Endothelial cell of umbilical vein (primary cell): ENCODE measurements at regions of chr20 and their contacts with region 1.

Region 1: GRCh38 chr20:36098364-36098763 is 56.2 kb upstream of the EPB41L1 start:
- DNase-seq: peak; percentile 83
- H3K4me3 ChIP-seq: no peak overlapping the region
- H3K27ac ChIP-seq: peak overlapping the region; percentile 54
- H3K4me1 ChIP-seq: peaks cover 28% of the 10 kb centered on the region
- H3K27me3 ChIP-seq: no peaks in the 10 kb centered on the region
- CTCF ChIP-seq: no peak
- POLR2A ChIP-seq: no peak

Region 2: DNA sequence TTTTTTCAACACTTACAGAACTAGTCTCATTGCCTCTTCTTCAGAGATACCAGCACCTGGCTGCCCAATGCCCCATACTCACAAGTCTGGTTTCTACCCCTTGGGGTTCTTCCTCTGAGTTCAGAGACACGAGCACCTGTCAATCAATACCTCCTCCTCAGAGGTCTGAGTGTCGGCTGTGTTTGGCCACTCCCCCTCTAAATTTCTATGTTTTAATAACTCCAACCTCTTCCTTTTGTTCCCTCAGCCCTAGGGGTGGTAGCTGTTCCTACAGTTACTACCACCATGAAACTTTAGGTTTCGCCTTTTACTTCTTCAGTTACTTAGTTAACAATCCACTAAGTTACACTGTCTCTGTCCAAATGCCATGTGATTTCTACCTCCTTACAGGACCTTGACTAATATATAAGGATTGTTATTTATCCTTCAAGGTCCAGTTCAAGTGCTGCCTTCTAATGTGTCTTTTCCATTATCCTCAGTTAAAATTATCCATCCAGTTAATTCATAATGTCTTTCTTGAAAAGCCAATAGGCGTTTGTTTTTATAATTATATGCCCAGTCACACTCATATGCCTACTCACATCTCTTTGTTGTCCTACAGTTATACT is 341.2 kb before region 1 on chr20:
- CTCF ChIA-PET with region 1: no interaction called
- POLR2A ChIA-PET with region 1: no interaction called
- dilution Hi-C with region 1: no loop called
- intact Hi-C with region 1: no loop called
- DNase-seq: no peak
- H3K4me3 ChIP-seq: no peak overlapping the region
- H3K27ac ChIP-seq: no peak overlapping the region
- H3K4me1 ChIP-seq: no peaks in the 10 kb centered on the region
- H3K27me3 ChIP-seq: no peaks in the 10 kb centered on the region
- CTCF ChIP-seq: no peak
- POLR2A ChIP-seq: no peak

Region 3: DNA sequence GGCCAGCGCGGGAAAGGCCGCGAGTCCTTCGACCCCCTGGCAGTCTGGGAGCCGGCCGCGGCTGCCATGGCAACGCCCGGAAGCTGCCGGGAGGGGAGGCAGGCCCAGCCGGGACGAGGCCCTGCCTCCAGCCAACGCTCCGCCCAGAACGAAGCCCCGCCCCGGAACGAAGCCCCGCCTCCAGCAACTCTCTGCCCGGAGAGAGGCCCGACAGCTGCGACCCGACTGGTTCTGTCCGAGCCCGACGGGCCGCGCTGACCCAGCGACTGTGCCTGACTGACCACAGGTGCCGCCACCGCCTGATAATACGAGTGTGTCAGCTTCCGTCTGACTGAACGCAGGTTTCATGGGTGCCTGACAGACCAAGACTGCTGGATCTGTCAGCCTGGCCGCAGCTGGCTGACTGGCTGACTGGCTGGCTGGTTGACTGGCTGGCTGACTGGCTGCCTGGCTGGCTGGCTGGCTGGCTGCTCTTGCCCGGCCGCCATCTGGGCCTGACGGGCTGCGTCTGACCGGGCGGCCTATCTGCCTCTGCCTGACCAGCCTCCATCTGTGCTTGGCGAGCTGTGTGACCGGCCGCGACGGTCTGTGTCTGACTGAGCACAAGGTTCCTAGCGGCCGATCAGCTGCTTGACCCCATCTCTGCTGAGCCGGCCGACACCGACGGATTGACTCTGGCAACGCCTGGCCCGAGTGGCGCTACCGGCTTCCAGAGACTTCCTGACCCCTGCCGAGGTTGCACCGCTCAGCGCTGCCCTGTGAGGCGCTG is 33.5 kb before region 1 on chr20:
- CTCF ChIA-PET with region 1: interaction called, 5 read pairs
- POLR2A ChIA-PET with region 1: interaction called, 6 read pairs
- dilution Hi-C with region 1: no loop called
- intact Hi-C with region 1: loop called (anchors 2 kb)
- DNase-seq: peak; percentile 93
- H3K4me3 ChIP-seq: peak overlapping the region in 1 of 3 experiments; percentile 44
- H3K27ac ChIP-seq: peak overlapping the region; percentile 16
- H3K4me1 ChIP-seq: no peaks in the 10 kb centered on the region
- H3K27me3 ChIP-seq: peaks cover 0 to 2% of the 10 kb centered on the region in 2 experiments
- CTCF ChIP-seq: peak in 1 of 2 donors; percentile 3
- POLR2A ChIP-seq: peak; percentile 74

Region 4: GRCh38 chr20:36135159-36135558 is 36.8 kb after region 1 on chr20:
- CTCF ChIA-PET with region 1: interaction called, 32 read pairs
- POLR2A ChIA-PET with region 1: no interaction called
- dilution Hi-C with region 1: no loop called
- intact Hi-C with region 1: loop called (anchors 5 kb)
- DNase-seq: no peak
- H3K4me3 ChIP-seq: no peak overlapping the region
- H3K27ac ChIP-seq: no peak overlapping the region
- H3K4me1 ChIP-seq: no peaks in the 10 kb centered on the region
- H3K27me3 ChIP-seq: no peaks in the 10 kb centered on the region
- CTCF ChIP-seq: no peak
- POLR2A ChIP-seq: no peak

Region 5: GRCh38 chr20:36339646-36340472 is 241.5 kb after region 1 on chr20:
- CTCF ChIA-PET with region 1: no interaction called
- POLR2A ChIA-PET with region 1: no interaction called
- dilution Hi-C with region 1: no loop called
- intact Hi-C with region 1: no loop called
- DNase-seq: no peak
- H3K4me3 ChIP-seq: no peak overlapping the region
- H3K27ac ChIP-seq: no peak overlapping the region
- H3K4me1 ChIP-seq: no peaks in the 10 kb centered on the region
- H3K27me3 ChIP-seq: peaks cover 0 to 2% of the 10 kb centered on the region in 2 experiments
- CTCF ChIP-seq: no peak
- POLR2A ChIP-seq: no peak